Panc1 (cell line): ENCODE measurements at regions of chr10 and their contacts with region 1.

Region 1: GRCh38 chr10:125868372-125868975 is 12.6 kb downstream of the DHX32 start:
- DNase-seq: peak; percentile 74
- ATAC-seq: peak; percentile 75
- H3K4me3 ChIP-seq: no peak overlapping the region
- H3K27ac ChIP-seq: peak overlapping the region; percentile 76
- H3K4me1 ChIP-seq: peaks cover 45% of the 10 kb centered on the region
- H3K27me3 ChIP-seq: no peaks in the 10 kb centered on the region
- CTCF ChIP-seq: peak; percentile 89

Region 2: GRCh38 chr10:125567529-125567928 is 300.9 kb before region 1 on chr10:
- CTCF ChIA-PET with region 1: no interaction called
- POLR2A ChIA-PET with region 1: no interaction called
- in situ Hi-C with region 1: no loop called
- intact Hi-C with region 1: no loop called
- DNase-seq: no peak
- ATAC-seq: no peak
- H3K4me3 ChIP-seq: no peak overlapping the region
- H3K27ac ChIP-seq: no peak overlapping the region
- H3K4me1 ChIP-seq: no peaks in the 10 kb centered on the region
- H3K27me3 ChIP-seq: peaks cover 12% of the 10 kb centered on the region
- CTCF ChIP-seq: no peak

Region 3: GRCh38 chr10:125976960-125977603 is 108.6 kb after region 1 on chr10:
- CTCF ChIA-PET with region 1: no interaction called
- POLR2A ChIA-PET with region 1: no interaction called
- in situ Hi-C with region 1: no loop called
- intact Hi-C with region 1: loop called (anchors 10 kb)
- DNase-seq: no peak
- ATAC-seq: no peak
- H3K4me3 ChIP-seq: no peak overlapping the region
- H3K27ac ChIP-seq: no peak overlapping the region
- H3K4me1 ChIP-seq: 0 out of 2 replicates have a peak, but pooled peaks cover 3% of the 10 kb centered on the region
- H3K27me3 ChIP-seq: no peaks in the 10 kb centered on the region
- CTCF ChIP-seq: peak; percentile 67

Region 4: DNA sequence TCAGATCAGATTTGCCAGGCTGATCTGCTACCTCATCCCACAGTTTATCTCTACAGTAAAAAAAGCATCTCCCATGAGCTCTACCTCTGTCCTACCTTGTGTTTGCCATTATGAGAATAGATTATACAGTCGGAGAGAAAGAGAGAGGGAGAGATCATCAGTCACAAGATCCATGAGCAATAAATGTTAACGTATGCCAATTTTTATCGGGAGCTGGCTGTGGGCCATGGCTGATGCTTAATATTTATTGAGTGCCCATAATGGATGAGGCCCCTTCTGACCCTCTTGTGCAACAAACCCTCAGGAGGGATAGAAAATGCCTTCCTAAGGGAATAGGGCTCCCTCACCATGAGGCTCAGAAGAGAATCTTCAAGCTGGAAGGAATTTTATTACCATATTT is 749.3 kb after region 1 on chr10:
- CTCF ChIA-PET with region 1: no interaction called
- POLR2A ChIA-PET with region 1: interaction called, 18 read pairs
- in situ Hi-C with region 1: no loop called
- intact Hi-C with region 1: no loop called
- DNase-seq: no peak
- ATAC-seq: no peak
- H3K4me3 ChIP-seq: no peak overlapping the region
- H3K27ac ChIP-seq: no peak overlapping the region
- H3K4me1 ChIP-seq: no peaks in the 10 kb centered on the region
- H3K27me3 ChIP-seq: peaks cover 14% of the 10 kb centered on the region; the same call in 1 of the 2 replicates
- CTCF ChIP-seq: no peak